ENCODE measurements at regions of chr2 and their contacts with region 1.

Region 1: GRCh38 chr2:170845343-170845742 is 28.7 kb downstream of the GAD1 start:
- DNase-seq: no peak
- H3K4me3 Mint-ChIP-seq: no peak overlapping the region
- H3K27ac Mint-ChIP-seq: no peak overlapping the region
- H3K4me1 Mint-ChIP-seq: peaks cover 18% of the 10 kb centered on the region
- H3K27me3 Mint-ChIP-seq: no peaks in the 10 kb centered on the region

Region 2: GRCh38 chr2:170824526-170825015 is 20.8 kb before region 1 on chr2:
- CTCF ChIA-PET with region 1: no interaction called
- POLR2A ChIA-PET with region 1: no interaction called
- DNase-seq: no peak
- H3K4me3 Mint-ChIP-seq: no peak overlapping the region
- H3K27ac Mint-ChIP-seq: no peak overlapping the region
- H3K4me1 Mint-ChIP-seq: peaks cover 26% of the 10 kb centered on the region
- H3K27me3 Mint-ChIP-seq: peaks cover 65% of the 10 kb centered on the region

Region 3: DNA sequence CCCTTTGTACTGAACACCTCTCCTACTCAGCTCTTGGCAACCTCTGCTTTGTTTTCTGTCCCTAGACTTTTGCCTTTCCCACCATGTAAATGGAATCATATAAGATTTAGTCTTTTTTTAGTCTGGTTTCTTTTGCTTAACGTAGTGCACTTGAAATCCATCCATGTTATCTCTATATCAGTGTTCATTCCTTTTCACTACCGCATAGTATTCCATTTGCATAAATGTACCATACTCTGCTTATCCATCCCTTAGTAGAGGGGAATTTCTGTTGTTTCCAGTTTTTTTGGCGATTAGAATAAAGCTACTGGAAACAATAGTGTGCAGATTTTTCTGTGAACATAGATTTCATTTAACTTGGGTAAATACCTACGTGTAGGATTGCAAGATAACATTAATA is 17.7 kb after region 1 on chr2:
- CTCF ChIA-PET with region 1: no interaction called
- POLR2A ChIA-PET with region 1: no interaction called
- DNase-seq: no peak
- H3K4me3 Mint-ChIP-seq: no peak overlapping the region
- H3K27ac Mint-ChIP-seq: no peak overlapping the region
- H3K4me1 Mint-ChIP-seq: no peaks in the 10 kb centered on the region
- H3K27me3 Mint-ChIP-seq: peaks cover 8% of the 10 kb centered on the region

Region 4: DNA sequence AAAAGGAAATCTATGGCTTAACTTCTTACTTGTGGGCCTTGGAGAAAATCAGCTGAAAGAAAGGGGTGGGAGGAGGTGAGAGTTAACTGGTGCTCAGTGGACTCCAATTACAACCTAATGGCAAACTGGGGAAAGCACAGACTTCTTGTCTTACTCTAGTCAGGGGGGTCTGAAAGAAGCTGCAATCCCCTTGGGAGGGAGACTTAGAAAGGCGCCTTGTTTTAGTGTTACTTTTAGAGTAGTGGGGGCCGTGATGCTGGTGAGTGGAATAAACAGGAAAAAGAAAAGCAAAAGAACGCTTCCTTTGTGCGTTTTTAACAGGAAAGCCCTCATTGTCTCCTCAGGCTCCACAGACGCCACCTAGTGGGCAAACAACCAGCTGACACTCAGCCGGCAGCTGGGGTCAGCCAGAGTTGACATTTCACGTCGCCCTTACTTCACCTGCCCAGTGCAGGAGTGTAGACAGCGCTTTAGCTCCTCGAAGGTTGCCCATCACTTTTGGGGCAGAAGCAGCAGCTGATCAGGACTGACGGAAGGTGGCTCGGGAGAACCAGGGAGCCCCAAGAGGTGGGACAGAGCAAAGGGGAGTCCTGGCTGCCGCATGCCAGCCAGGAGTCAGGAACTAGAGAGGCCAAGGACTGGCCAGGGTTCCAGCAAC is 27.8 kb after region 1 on chr2:
- CTCF ChIA-PET with region 1: interaction called, 10 read pairs
- POLR2A ChIA-PET with region 1: no interaction called
- DNase-seq: peak; percentile 85
- H3K4me3 Mint-ChIP-seq: peak overlapping the region; percentile 27
- H3K27ac Mint-ChIP-seq: peak overlapping the region; percentile 51
- H3K4me1 Mint-ChIP-seq: peaks cover 17% of the 10 kb centered on the region
- H3K27me3 Mint-ChIP-seq: no peaks in the 10 kb centered on the region